Psoas muscle (tissue), 8 donors: ENCODE measurements at regions of chr12 and their contacts with region 1.

Region 1: DNA sequence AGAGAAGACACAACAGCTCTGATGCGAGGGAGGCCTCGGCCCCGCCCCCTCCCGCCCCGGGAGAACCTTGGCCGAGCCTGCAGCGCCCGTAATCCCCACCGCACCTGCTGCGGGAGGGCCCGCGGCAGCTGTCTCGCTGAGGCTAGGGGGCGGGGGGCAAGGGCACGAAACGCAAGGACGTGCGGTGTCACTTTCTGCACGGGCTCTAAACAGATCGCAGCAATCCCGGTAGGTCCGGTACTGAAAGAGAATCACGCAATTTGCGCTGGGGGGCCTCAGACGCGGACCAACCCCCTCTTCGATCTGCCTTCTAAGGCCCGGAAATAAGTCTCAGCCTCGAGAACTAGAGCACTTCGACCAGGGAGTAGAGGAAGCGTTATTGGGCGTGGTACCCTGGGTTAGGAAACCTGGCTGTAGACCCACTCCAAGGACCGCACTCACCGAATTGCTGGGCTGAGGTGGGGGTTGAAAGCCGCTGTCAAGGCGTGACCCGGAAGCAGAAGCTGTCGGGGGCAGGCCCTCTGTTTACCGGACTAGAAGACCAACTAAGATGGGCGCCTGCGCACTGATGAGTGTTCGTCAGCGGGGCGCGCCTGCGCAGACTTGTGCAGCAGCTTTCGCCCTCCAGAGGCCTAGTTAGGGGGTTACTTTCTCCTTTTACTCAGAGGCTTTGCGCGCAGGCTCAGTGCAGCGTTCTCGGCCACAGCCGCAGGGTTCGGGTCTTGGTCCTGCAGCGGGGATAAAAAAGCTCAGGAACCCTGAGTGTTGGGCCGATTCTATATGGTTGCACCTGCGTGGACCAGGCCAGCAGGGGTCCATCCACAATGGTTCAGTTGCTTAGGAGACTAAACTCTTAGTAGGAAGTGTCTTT is at the start of gene ASB8:
- DNase-seq: peak; percentile 99 to 100
- ATAC-seq: peak; percentile 86 to 91 (median 90)
- H3K4me3 ChIP-seq: peak within 1 kb of the TSS; percentile 87
- H3K27ac ChIP-seq: peak within 1 kb of the TSS; percentile 97
- H3K4me1 ChIP-seq: peaks cover 62% of the 10 kb centered on the region
- H3K27me3 ChIP-seq: no peaks in the 10 kb centered on the region
- CTCF ChIP-seq: peak; percentile 55
- total RNA-seq, gene ASB8: 158 to 477 (median 228) TPM

Region 2: GRCh38 chr12:48105862-48106680 is 51.2 kb before region 1 on chr12 and contains the start of gene SENP1:
- intact Hi-C with region 1: loop called in 1 of 2 experiments (anchors 5 kb)
- DNase-seq: peak; percentile 92 to 95
- ATAC-seq: peak; percentile 95 to 99 (median 98)
- H3K4me3 ChIP-seq: peak within 1 kb of the TSS; percentile 75
- H3K27ac ChIP-seq: peak within 1 kb of the TSS; percentile 98
- H3K4me1 ChIP-seq: peaks cover 16% of the 10 kb centered on the region
- H3K27me3 ChIP-seq: no peaks in the 10 kb centered on the region
- CTCF ChIP-seq: no peak
- total RNA-seq, gene SENP1: 6.3 to 10.2 (median 8.0) TPM

Region 3: GRCh38 chr12:48125985-48126384 is 31.3 kb before region 1 on chr12:
- intact Hi-C with region 1: loop called in 1 of 2 experiments (anchors 2 kb)
- DNase-seq: peak; percentile 74 to 91
- ATAC-seq: peak; percentile 83 to 92 (median 90)
- H3K4me3 ChIP-seq: peak overlapping the region; percentile 75
- H3K27ac ChIP-seq: peak overlapping the region; percentile 87
- H3K4me1 ChIP-seq: peaks cover 45% of the 10 kb centered on the region
- H3K27me3 ChIP-seq: no peaks in the 10 kb centered on the region
- CTCF ChIP-seq: no peak